ENCODE measurements at regions of chr9 and their contacts with region 1.

Region 1: DNA sequence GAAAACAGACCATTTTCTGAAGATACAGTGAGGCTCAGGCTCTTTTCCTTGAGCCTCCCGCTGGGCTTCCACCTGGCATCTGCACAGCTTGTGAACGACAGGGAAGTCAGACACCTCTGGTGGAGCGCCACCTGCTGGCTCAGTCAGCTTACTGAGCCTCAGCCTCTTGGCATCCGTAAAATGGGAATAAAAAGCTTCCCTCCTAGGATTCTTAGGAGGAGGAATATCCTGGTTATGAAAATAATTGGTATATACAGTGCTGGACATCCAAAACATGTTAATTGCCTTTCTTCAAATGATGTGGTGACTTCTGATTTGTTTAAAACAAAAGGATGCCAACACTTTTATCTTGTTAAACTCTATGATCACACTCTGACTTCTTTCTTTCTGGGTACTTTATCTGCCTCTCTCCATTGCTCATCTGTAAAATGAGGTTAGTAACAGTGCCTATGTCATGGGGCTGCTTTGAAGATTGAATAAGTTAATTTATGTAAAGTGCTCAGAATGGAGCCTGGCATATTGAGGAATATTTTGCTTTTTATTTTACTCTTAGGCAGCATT is 67.5 kb downstream of the MAMDC2 start:
- DNase-seq: peak; percentile 79
- H3K4me3 Mint-ChIP-seq: no peak overlapping the region
- H3K27ac Mint-ChIP-seq: no peak overlapping the region
- H3K4me1 Mint-ChIP-seq: peaks cover 30% of the 10 kb centered on the region
- H3K27me3 Mint-ChIP-seq: no peaks in the 10 kb centered on the region
- CTCF ChIP-seq: peak; percentile 80

Region 2: DNA sequence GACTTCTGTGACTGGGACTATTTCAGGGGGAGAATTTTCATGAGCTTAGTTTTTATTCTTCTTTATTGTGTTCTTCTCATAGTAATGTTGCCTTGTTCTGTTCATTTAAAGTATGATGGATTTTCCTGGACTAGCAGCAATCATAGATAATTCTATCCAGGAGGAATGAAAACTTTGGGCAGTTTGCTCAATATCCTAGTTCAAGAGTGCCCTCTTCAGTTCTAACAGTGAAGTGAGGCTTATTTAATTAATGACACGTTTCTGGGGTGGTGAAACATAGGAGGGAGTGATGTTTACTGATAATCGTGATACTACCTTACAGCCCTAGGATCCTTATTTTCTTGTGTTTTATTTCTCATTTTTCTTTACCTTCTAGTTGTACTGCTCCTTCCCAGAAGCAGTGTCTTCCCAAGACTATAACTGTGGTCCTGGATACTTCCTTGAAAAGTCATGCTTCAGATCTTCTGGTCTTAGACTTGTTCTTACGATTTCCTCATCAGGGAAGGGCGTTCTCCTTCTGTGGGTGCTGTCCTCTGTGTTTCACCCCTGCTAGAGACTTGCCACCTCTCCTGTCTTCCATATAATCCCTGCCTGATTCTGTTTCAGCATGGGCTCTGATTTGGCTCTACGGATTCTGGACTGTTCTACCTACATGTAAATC is 233.1 kb before region 1 on chr9:
- CTCF ChIA-PET with region 1: interaction called, 3 read pairs
- POLR2A ChIA-PET with region 1: no interaction called
- intact Hi-C with region 1: loop called (anchors 5 kb)
- DNase-seq: peak; percentile 63
- H3K4me3 Mint-ChIP-seq: no peak overlapping the region
- H3K27ac Mint-ChIP-seq: no peak overlapping the region
- H3K4me1 Mint-ChIP-seq: peaks cover 8% of the 10 kb centered on the region
- H3K27me3 Mint-ChIP-seq: no peaks in the 10 kb centered on the region
- CTCF ChIP-seq: peak; percentile 58

Region 3: GRCh38 chr9:69981686-69982450 is 129.3 kb before region 1 on chr9:
- CTCF ChIA-PET with region 1: interaction called, 684 read pairs
- POLR2A ChIA-PET with region 1: interaction called, 3 read pairs
- intact Hi-C with region 1: no loop called
- DNase-seq: peak; percentile 1
- H3K4me3 Mint-ChIP-seq: no peak overlapping the region
- H3K27ac Mint-ChIP-seq: peak overlapping the region; percentile 19
- H3K4me1 Mint-ChIP-seq: peaks cover 13% of the 10 kb centered on the region
- H3K27me3 Mint-ChIP-seq: no peaks in the 10 kb centered on the region
- CTCF ChIP-seq: no peak

Region 4: GRCh38 chr9:70049236-70049635 is 61.9 kb before region 1 on chr9:
- CTCF ChIA-PET with region 1: interaction called, 30 read pairs
- POLR2A ChIA-PET with region 1: interaction called, 3 read pairs
- intact Hi-C with region 1: no loop called
- DNase-seq: peak; percentile 85
- H3K4me3 Mint-ChIP-seq: no peak overlapping the region
- H3K27ac Mint-ChIP-seq: peak overlapping the region; percentile 16
- H3K4me1 Mint-ChIP-seq: peaks cover 76% of the 10 kb centered on the region
- H3K27me3 Mint-ChIP-seq: no peaks in the 10 kb centered on the region
- CTCF ChIP-seq: no peak

Region 5: DNA sequence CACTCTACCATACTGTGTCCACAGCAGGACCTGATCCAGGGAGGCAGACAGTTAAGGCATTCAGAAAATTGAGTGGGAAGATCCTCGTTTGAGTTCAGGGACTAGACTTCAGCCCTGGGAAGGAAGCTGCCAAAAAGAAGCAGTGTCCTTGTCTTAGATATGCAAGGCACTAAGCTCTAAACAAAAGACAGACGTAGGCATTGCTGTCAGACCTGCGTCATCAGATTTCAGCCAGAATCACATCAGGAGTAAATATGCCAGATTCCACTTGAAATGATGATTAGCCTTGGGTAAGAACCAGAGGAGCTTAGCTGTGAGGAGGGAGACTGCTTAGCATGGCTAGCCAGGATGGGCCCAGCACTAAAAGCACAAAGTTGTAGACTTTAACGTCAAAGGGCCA is 10.8 kb before region 1 on chr9:
- CTCF ChIA-PET with region 1: interaction called, 77 read pairs
- POLR2A ChIA-PET with region 1: no interaction called
- intact Hi-C with region 1: no loop called
- DNase-seq: no peak
- H3K4me3 Mint-ChIP-seq: no peak overlapping the region
- H3K27ac Mint-ChIP-seq: no peak overlapping the region
- H3K4me1 Mint-ChIP-seq: no peaks in the 10 kb centered on the region
- H3K27me3 Mint-ChIP-seq: no peaks in the 10 kb centered on the region
- CTCF ChIP-seq: no peak

Measured in MCF 10A (cell line).